ENCODE measurements at regions of chr6 and their contacts with region 1.

Region 1: DNA sequence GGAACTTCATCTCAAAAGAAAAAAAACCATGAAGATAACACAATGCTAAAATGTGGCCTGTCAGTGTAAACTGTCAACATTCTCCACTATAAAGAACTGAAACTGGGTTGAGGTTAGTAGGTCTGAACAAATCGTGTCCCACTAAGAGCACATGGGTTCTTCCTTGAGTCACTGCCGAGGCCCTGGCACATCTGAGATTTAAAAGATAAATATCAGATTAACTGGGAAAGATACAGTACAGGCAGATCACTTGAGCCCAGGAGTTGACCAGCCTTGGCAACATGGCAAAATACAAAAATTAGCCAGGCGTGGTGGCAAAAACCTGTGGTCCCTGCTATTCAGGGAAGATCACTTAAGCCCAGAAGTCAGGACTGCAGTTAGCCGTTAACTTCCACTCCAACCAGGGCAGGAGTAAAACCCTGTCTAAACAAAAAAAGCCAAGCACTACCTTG is 5.6 kb downstream of the EEF1A1 start:
- DNase-seq: no peak
- ATAC-seq: peak; percentile 54
- H3K4me3 ChIP-seq: no peak overlapping the region
- H3K27ac ChIP-seq: peak overlapping the region; percentile 73
- H3K4me1 ChIP-seq: peaks cover 17% of the 10 kb centered on the region
- H3K27me3 ChIP-seq: no peaks in the 10 kb centered on the region
- CTCF ChIP-seq: no peak
- EP300 ChIP-seq: peak in 1 of 2 experiments; percentile 35; a peak in 1 of 4 replicates
- POLR2A ChIP-seq: peak; percentile 66; the same call in 1 of the 2 replicates
- RAD21 ChIP-seq: no peak

Region 2: DNA sequence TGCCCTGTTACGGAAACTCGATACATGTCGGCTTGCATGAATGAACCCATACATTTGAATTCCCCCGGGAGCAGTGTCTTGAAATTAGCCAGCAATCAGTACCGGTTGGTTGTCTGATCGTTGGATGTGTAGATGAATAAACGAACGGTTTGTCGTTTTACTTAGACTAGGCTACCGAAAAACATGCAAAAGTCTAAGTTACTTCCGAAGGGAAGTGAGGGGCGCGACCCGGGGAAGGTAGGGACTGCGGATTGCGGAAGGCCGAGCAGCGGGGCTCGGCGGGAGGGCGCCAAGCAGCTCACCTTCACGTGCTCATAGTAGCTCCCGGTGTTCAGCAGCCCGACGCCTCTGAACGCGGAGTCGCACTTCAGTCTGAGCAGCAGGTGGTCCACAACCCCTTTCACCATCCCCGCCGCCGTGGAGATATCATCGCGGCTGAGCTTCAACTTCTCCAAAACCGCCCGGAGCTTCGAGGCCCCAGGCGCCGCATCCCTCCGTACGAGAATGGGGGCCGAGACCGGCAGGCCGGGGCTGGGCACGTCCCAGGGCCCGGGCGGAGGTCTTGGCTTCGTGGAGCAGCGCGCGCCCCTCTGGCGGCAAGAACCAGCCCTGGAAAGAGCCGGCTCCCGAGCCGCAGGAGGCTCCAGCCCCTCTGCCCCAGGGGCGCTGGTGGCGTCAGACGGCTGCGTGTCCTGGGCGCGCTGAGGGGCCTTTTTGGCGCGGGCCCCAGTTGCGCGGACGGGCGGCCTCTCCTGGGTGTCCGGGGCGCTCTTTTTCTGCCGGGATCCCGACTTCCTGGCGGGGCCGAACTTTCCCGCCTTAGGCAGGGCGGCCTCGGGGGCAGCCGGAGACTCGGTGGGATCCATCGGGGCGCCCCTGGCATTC is 63.8 kb before region 1 on chr6:
- CTCF ChIA-PET with region 1: interaction called, 3 read pairs
- POLR2A ChIA-PET with region 1: interaction called, 25 read pairs
- RAD21 ChIA-PET with region 1: interaction called, 22 read pairs
- SMC1A ChIA-PET with region 1: interaction called, 18 read pairs
- in situ Hi-C with region 1: no loop called
- intact Hi-C with region 1: loop called (anchors 2 kb)
- DNase-seq: no peak
- ATAC-seq: peak; percentile 72
- H3K4me3 ChIP-seq: peak overlapping the region; percentile 91
- H3K27ac ChIP-seq: peak overlapping the region; percentile 95
- H3K4me1 ChIP-seq: 0 out of 2 replicates have a peak, but pooled peaks cover 3% of the 10 kb centered on the region
- H3K27me3 ChIP-seq: no peaks in the 10 kb centered on the region
- CTCF ChIP-seq: no peak
- EP300 ChIP-seq: no peak
- POLR2A ChIP-seq: peak; percentile 84
- RAD21 ChIP-seq: no peak

Region 3: GRCh38 chr6:73471686-73472290 is 43.4 kb before region 1 on chr6:
- CTCF ChIA-PET with region 1: interaction called, 16 read pairs
- POLR2A ChIA-PET with region 1: interaction called, 20 read pairs
- RAD21 ChIA-PET with region 1: interaction called, 11 read pairs
- SMC1A ChIA-PET with region 1: interaction called, 11 read pairs
- in situ Hi-C with region 1: no loop called
- intact Hi-C with region 1: loop called (anchors 2 kb)
- DNase-seq: peak; percentile 58
- ATAC-seq: peak; percentile 98
- H3K4me3 ChIP-seq: peak overlapping the region; percentile 48; the same call in 1 of the 2 replicates
- H3K27ac ChIP-seq: peak overlapping the region; percentile 90
- H3K4me1 ChIP-seq: peaks cover 15% of the 10 kb centered on the region
- H3K27me3 ChIP-seq: no peaks in the 10 kb centered on the region
- CTCF ChIP-seq: no peak
- EP300 ChIP-seq: peak; percentile 43 to 89; a peak in 3 of 4 replicates
- POLR2A ChIP-seq: no peak
- RAD21 ChIP-seq: no peak

Region 4: GRCh38 chr6:73580247-73581149 is 65.3 kb after region 1 on chr6:
- CTCF ChIA-PET with region 1: interaction called, 16 read pairs
- POLR2A ChIA-PET with region 1: interaction called, 55 read pairs
- RAD21 ChIA-PET with region 1: interaction called, 49 read pairs
- SMC1A ChIA-PET with region 1: interaction called, 43 read pairs
- in situ Hi-C with region 1: no loop called
- intact Hi-C with region 1: no loop called
- DNase-seq: peak; percentile 61
- ATAC-seq: peak; percentile 92
- H3K4me3 ChIP-seq: peak overlapping the region; percentile 34; the same call in 1 of the 2 replicates
- H3K27ac ChIP-seq: peak overlapping the region; percentile 96
- H3K4me1 ChIP-seq: peaks cover 20% of the 10 kb centered on the region
- H3K27me3 ChIP-seq: no peaks in the 10 kb centered on the region
- CTCF ChIP-seq: peak; percentile 42 to 53 (median 46); a peak in 5 of 6 replicates
- EP300 ChIP-seq: no peak
- POLR2A ChIP-seq: peak; percentile 71
- RAD21 ChIP-seq: 0 out of 2 replicates have a peak, but pooled peaks have one; percentile 36

Region 5: DNA sequence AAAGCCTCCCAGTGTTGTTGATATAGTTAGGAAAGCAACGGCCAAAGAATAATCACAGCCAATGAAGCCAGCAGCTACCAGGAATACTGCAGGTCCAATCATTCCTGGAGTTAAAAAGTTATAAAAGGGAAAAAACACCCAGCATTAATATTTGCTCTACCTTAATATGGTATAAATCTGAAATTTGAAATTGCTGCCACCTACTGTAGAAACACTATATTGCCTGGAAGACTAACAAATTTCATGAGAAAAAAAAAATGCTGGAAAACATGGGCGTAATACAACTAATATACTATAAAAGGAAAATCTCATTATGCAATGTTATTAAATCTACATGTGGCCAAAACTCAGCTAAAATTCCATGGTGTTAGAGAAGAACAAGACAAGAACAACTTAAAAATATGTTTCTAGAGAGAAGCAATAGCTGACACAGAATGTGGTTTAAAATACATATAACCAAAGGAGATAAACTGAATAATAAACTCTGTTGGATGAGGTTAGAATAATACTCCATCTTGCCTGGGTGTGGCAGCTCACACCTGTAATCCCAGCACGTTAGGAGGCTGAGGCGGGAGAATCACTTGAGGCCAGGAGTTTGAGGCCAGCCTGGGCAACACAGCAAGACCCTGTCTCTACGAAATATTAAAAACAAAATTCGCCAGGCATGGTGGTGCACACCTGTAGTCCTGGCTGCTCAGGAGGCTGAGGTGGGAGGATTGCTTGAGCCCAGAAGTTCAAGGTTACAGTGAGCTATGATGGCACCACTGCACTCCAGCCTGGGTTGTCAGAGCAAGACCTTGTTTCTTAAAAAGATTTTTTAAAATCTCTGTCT is 95.4 kb after region 1 on chr6:
- CTCF ChIA-PET with region 1: interaction called, 127 read pairs
- POLR2A ChIA-PET with region 1: interaction called, 4 read pairs
- RAD21 ChIA-PET with region 1: interaction called, 51 read pairs
- SMC1A ChIA-PET with region 1: interaction called, 50 read pairs
- in situ Hi-C with region 1: loop called (anchors 25 kb)
- intact Hi-C with region 1: loop called (anchors 1 kb)
- DNase-seq: peak; percentile 23
- ATAC-seq: peak; percentile 79
- H3K4me3 ChIP-seq: no peak overlapping the region
- H3K27ac ChIP-seq: no peak overlapping the region
- H3K4me1 ChIP-seq: no peaks in the 10 kb centered on the region
- H3K27me3 ChIP-seq: no peaks in the 10 kb centered on the region
- CTCF ChIP-seq: peak; percentile 37 to 66 (median 58); a peak in 5 of 6 replicates
- EP300 ChIP-seq: no peak
- POLR2A ChIP-seq: no peak
- RAD21 ChIP-seq: peak; percentile 74